Activated B cell treated with CpG ODN at 0.5 μM for 24 hours (primary cell): ENCODE measurements at regions of chr16 and their contacts with region 1.

Region 1: DNA sequence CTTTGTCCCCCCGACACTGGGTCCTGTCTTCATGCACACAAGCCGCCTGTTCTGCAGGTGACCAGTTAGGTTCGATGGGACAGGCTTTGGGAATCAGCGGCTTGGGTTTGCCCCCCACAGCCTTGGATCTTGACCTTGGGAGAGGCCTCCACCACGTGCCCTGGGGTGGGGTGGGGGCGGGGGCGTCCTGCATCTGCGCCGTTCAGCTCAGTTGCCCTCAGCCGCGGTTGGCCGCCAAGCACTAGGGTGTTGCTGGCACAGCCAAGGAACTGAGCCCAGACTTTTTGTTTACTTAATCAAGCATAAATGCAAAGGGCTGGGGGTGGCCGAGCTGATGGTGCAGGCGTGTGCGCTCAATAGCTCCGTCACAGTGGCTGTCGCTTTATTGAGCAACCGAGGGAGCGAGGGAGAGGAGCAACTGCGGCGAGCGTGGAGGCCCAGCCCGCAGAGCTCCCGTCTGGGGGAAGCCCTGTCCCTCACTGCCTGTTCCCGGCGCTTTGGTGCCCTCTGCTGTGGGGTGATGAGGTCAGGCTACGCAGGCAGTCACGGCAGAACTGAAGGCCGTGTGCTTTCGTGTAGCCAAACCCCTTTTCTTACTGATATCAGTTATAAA is 33.9 kb downstream of the JPH3 start:
- DNase-seq: peak; percentile 69
- ATAC-seq: peak; percentile 90
- H3K4me3 Mint-ChIP-seq: peak overlapping the region; percentile 84
- H3K27ac Mint-ChIP-seq: peak overlapping the region; percentile 69
- H3K4me1 Mint-ChIP-seq: peaks cover 24% of the 10 kb centered on the region
- H3K27me3 Mint-ChIP-seq: peaks cover 19% of the 10 kb centered on the region
- CTCF ChIP-seq: peak; percentile 4

Region 2: GRCh38 chr16:87033541-87034300 is 602.5 kb before region 1 on chr16:
- CTCF ChIA-PET with region 1: no interaction called
- POLR2A ChIA-PET with region 1: no interaction called
- intact Hi-C with region 1: no loop called
- DNase-seq: no peak
- ATAC-seq: no peak
- H3K4me3 Mint-ChIP-seq: no peak overlapping the region
- H3K27ac Mint-ChIP-seq: no peak overlapping the region
- H3K4me1 Mint-ChIP-seq: no peaks in the 10 kb centered on the region
- H3K27me3 Mint-ChIP-seq: peaks cover 6% of the 10 kb centered on the region
- CTCF ChIP-seq: no peak

Region 3: GRCh38 chr16:87324411-87325275 is 311.5 kb before region 1 on chr16:
- CTCF ChIA-PET with region 1: interaction called, 13 read pairs
- POLR2A ChIA-PET with region 1: no interaction called
- intact Hi-C with region 1: loop called (anchors 1 kb)
- DNase-seq: peak; percentile 36
- ATAC-seq: peak; percentile 94
- H3K4me3 Mint-ChIP-seq: no peak overlapping the region
- H3K27ac Mint-ChIP-seq: no peak overlapping the region
- H3K4me1 Mint-ChIP-seq: no peaks in the 10 kb centered on the region
- H3K27me3 Mint-ChIP-seq: no peaks in the 10 kb centered on the region
- CTCF ChIP-seq: no peak

Region 4: GRCh38 chr16:87350681-87351319 is 285.4 kb before region 1 on chr16:
- CTCF ChIA-PET with region 1: no interaction called
- POLR2A ChIA-PET with region 1: no interaction called
- intact Hi-C with region 1: no loop called
- DNase-seq: no peak
- ATAC-seq: no peak
- H3K4me3 Mint-ChIP-seq: no peak overlapping the region
- H3K27ac Mint-ChIP-seq: no peak overlapping the region
- H3K4me1 Mint-ChIP-seq: peaks cover under 1% of the 10 kb centered on the region
- H3K27me3 Mint-ChIP-seq: no peaks in the 10 kb centered on the region
- CTCF ChIP-seq: no peak

Region 5: GRCh38 chr16:87416826-87417527 is 219.2 kb before region 1 on chr16:
- CTCF ChIA-PET with region 1: interaction called, 50 read pairs
- POLR2A ChIA-PET with region 1: interaction called, 4 read pairs
- intact Hi-C with region 1: loop called (anchors 1 kb)
- DNase-seq: no peak
- ATAC-seq: no peak
- H3K4me3 Mint-ChIP-seq: no peak overlapping the region
- H3K27ac Mint-ChIP-seq: no peak overlapping the region
- H3K4me1 Mint-ChIP-seq: no peaks in the 10 kb centered on the region
- H3K27me3 Mint-ChIP-seq: no peaks in the 10 kb centered on the region
- CTCF ChIP-seq: no peak

Region 6: DNA sequence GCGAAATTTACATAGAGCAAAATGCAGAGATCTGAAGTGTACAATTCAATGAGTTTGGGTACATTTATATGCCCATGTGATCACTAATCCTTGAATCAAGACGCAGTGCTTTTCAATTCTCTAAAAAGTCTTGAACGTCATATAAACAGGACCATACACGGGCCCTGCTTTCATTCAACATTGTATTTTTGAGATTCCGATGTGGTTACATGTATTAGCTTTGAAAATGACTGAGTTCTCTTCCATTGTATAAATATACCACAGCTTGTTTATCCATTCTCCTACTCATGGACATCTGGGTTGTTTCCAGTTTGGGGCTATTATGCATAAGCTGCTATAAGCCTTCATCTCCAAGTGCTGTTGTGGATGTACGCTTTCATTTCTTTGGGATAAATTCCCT is 188.9 kb before region 1 on chr16:
- CTCF ChIA-PET with region 1: no interaction called
- POLR2A ChIA-PET with region 1: no interaction called
- intact Hi-C with region 1: no loop called
- DNase-seq: no peak
- ATAC-seq: no peak
- H3K4me3 Mint-ChIP-seq: no peak overlapping the region
- H3K27ac Mint-ChIP-seq: no peak overlapping the region
- H3K4me1 Mint-ChIP-seq: no peaks in the 10 kb centered on the region
- H3K27me3 Mint-ChIP-seq: no peaks in the 10 kb centered on the region
- CTCF ChIP-seq: no peak

Region 7: GRCh38 chr16:87492721-87493607 is 143.2 kb before region 1 on chr16 and contains the start of gene ZCCHC14:
- CTCF ChIA-PET with region 1: no interaction called
- POLR2A ChIA-PET with region 1: no interaction called
- intact Hi-C with region 1: loop called (anchors 2 kb)
- DNase-seq: peak; percentile 89
- ATAC-seq: peak; percentile 91
- H3K4me3 Mint-ChIP-seq: peak within 1 kb of the TSS; percentile 82
- H3K27ac Mint-ChIP-seq: peak within 1 kb of the TSS; percentile 59
- H3K4me1 Mint-ChIP-seq: peaks cover 46% of the 10 kb centered on the region
- H3K27me3 Mint-ChIP-seq: peaks cover 22% of the 10 kb centered on the region
- CTCF ChIP-seq: no peak
- total RNA-seq, gene ZCCHC14: 3.4 and 3.8 TPM in 2 replicates

Region 8: GRCh38 chr16:87587636-87588035 is 48.5 kb before region 1 on chr16:
- CTCF ChIA-PET with region 1: interaction called, 3 read pairs
- POLR2A ChIA-PET with region 1: no interaction called
- intact Hi-C with region 1: loop called (anchors 1 kb)
- DNase-seq: no peak
- ATAC-seq: no peak
- H3K4me3 Mint-ChIP-seq: no peak overlapping the region
- H3K27ac Mint-ChIP-seq: no peak overlapping the region
- H3K4me1 Mint-ChIP-seq: peaks cover 3% of the 10 kb centered on the region
- H3K27me3 Mint-ChIP-seq: peaks cover 28% of the 10 kb centered on the region
- CTCF ChIP-seq: no peak

Region 9: GRCh38 chr16:87713451-87714229 is 77.5 kb after region 1 on chr16:
- CTCF ChIA-PET with region 1: no interaction called
- POLR2A ChIA-PET with region 1: no interaction called
- intact Hi-C with region 1: no loop called
- DNase-seq: no peak
- ATAC-seq: peak; percentile 67
- H3K4me3 Mint-ChIP-seq: no peak overlapping the region
- H3K27ac Mint-ChIP-seq: no peak overlapping the region
- H3K4me1 Mint-ChIP-seq: peaks cover 10% of the 10 kb centered on the region
- H3K27me3 Mint-ChIP-seq: no peaks in the 10 kb centered on the region
- CTCF ChIP-seq: no peak